PC-9 (cell line): ENCODE measurements at regions of chr12 and their contacts with region 1.

Region 1: DNA sequence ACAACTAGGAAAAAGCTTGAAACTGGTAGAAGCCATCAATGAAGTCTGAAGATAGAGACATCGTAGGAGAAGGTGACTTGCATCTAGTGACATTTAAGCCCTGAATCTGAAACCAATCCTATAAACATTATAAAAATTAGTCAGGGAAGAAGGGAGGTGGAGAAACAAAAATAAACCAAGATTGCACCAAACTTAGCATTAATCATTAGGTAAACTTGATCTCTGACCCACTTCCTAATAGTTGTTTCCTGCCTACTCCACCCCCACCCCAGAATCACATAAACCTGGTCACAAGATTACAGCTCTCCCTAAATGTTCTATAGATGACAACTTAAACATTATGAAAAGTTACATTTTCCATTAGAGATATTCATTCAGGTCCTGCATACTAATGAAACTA is 40.4 kb downstream of the TSPAN19 start:
- DNase-seq: no peak
- H3K4me3 ChIP-seq: no peak overlapping the region
- H3K27ac ChIP-seq: no peak overlapping the region
- H3K4me1 ChIP-seq: peaks cover 11% of the 10 kb centered on the region
- H3K27me3 ChIP-seq: no peaks in the 10 kb centered on the region
- CTCF ChIP-seq: no peak

Region 2: GRCh38 chr12:83256562-83256961 is 1739.1 kb before region 1 on chr12:
- CTCF ChIA-PET with region 1: no interaction called
- POLR2A ChIA-PET with region 1: interaction called, 10 read pairs
- intact Hi-C with region 1: no loop called
- DNase-seq: no peak
- H3K4me3 ChIP-seq: no peak overlapping the region
- H3K27ac ChIP-seq: no peak overlapping the region
- H3K4me1 ChIP-seq: no peaks in the 10 kb centered on the region
- H3K27me3 ChIP-seq: no peaks in the 10 kb centered on the region
- CTCF ChIP-seq: no peak

Region 3: GRCh38 chr12:84727964-84728363 is 267.7 kb before region 1 on chr12:
- CTCF ChIA-PET with region 1: no interaction called
- POLR2A ChIA-PET with region 1: no interaction called
- intact Hi-C with region 1: no loop called
- DNase-seq: peak; percentile 36 to 52
- H3K4me3 ChIP-seq: no peak overlapping the region
- H3K27ac ChIP-seq: no peak overlapping the region
- H3K4me1 ChIP-seq: 0 out of 2 replicates have a peak, but pooled peaks cover 3% of the 10 kb centered on the region
- H3K27me3 ChIP-seq: no peaks in the 10 kb centered on the region
- CTCF ChIP-seq: no peak